Gastrocnemius medialis (tissue), 4 donors: ENCODE measurements at regions of chr16 and their contacts with region 1.

Region 1: DNA sequence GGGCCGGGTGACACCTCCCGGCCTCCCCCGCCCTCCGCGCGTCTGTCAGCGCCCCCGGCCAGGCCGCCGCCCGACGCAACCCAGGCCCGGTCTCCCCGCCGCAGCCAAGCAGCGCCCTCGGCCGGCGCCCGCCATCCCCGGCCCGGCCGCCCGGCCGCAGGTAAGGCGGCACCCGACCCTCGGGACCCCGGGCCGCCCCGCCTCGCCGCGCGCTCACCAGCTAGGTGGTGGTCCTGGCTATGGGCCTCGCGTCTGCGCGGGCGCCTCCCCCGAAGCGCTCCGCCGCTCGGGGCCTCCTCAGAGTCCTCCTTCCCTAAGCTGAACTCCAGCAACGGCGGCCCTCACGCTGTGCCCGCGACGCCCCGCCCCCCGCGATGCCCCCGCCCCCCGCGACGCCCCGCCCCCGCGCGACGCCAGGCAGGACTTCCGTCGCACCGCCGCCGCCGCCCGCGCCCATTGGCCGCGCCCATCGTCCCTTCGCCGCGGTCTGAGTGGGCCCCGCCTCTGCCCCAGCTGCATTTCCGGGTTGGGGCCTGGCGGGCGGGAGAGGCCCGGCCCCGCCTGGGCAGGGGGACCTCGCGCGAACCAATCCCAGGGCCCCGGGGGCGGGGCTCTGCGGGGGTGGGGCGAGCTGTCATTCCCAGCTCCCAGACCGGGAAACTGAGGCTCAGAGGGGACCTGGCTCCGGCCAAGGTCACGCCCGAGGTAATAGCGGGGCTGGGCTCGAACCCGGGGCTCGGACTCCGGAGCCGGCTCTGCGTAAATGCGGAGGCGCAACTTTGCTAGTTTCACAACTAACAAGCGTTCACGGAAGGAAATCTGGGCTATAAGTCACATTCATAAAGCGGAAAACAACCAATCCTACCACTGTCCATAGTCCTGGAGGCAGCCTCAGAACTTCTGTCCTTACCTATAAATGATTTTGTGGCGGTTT is 9.0 kb upstream of the KCTD5 start:
- DNase-seq: peak; percentile 91 to 96
- ATAC-seq: peak; percentile 70 to 84
- H3K4me3 ChIP-seq: peak overlapping the region; percentile 58 to 89 (median 72)
- H3K27ac ChIP-seq: peak overlapping the region; percentile 79 to 86 (median 82)
- H3K4me1 ChIP-seq: peaks cover 26 to 32% of the 10 kb centered on the region in 2 donors
- H3K27me3 ChIP-seq: no peaks in the 10 kb centered on the region
- CTCF ChIP-seq: no peak
- POLR2A ChIP-seq: peak; percentile 67 to 69

Region 2: GRCh38 chr16:2155091-2156021 is 518.0 kb before region 1 on chr16 and contains the start of gene TRAF7:
- in situ Hi-C with region 1: no loop called
- intact Hi-C with region 1: loop called (anchors 5 kb)
- DNase-seq: peak; percentile 99 to 100
- ATAC-seq: peak; percentile 95 to 98
- H3K4me3 ChIP-seq: peak within 1 kb of the TSS; percentile 71 to 89 (median 82)
- H3K27ac ChIP-seq: peak within 1 kb of the TSS; percentile 84 to 90 (median 86)
- H3K4me1 ChIP-seq: peaks cover 53 to 66% of the 10 kb centered on the region in 2 donors
- H3K27me3 ChIP-seq: no peaks in the 10 kb centered on the region
- CTCF ChIP-seq: peak in 1 of 5 experiments; percentile 3
- POLR2A ChIP-seq: peak; percentile 99
- total RNA-seq, gene TRAF7: 39.5 to 71.4 (median 55.9) TPM

Region 3: DNA sequence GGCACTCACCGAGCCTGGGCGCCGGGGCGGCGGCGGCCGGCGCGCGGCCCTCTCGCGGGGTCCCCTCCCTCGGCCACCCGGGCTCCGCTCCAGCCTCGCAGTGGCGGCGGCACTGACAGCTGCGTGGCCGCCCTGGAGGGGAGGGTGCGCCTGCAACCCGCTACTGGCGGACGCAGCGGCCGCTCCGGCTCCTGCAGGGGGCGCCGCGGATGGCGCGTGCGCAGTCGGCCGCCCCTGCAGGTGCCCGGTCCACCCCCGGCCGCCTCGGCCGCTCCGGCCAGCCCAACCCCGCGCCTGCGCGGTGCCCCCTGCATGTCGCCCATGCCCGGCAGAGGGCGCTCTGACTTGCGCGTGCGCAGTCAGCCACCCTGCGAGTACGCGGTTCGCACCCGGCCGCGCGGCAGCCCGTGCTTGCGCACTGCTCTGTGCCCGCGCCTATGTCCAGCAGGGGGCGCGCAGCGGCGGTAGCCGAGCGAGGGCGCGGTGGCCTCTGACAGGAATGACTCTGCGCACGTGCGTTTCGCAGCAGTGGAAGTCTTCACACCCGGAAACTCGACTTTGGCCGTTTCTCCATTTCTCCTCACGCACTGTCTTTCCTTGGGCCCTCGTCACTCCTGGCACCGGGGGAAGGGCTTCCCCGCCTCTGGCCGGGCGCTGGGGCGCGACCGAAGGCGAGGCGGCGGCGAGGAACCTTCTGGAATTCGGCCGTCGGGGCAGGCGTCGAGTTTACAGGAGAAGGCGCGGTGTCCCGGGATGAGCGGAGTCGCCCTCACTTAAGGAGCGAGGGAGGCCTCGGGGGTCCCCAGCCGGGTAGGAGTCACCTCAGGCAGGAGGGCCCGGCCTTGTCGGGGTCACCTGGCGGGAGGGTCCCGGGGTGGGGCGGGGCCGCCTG is 332.5 kb before region 1 on chr16 and contains the start of gene ABCA3:
- in situ Hi-C with region 1: no loop called
- intact Hi-C with region 1: no loop called
- DNase-seq: peak; percentile 74 to 87
- ATAC-seq: peak; percentile 84 to 89
- H3K4me3 ChIP-seq: peak within 1 kb of the TSS; percentile 65 to 98 (median 82)
- H3K27ac ChIP-seq: peak within 1 kb of the TSS; percentile 30 to 54 (median 36)
- H3K4me1 ChIP-seq: peaks cover 9 to 20% of the 10 kb centered on the region in 2 donors
- H3K27me3 ChIP-seq: no peaks in the 10 kb centered on the region
- CTCF ChIP-seq: peak; percentile 96 to 100 (median 100)
- POLR2A ChIP-seq: peak; percentile 40 to 70
- total RNA-seq, gene ABCA3: 2.7 to 15.0 (median 10.9) TPM

Region 4: DNA sequence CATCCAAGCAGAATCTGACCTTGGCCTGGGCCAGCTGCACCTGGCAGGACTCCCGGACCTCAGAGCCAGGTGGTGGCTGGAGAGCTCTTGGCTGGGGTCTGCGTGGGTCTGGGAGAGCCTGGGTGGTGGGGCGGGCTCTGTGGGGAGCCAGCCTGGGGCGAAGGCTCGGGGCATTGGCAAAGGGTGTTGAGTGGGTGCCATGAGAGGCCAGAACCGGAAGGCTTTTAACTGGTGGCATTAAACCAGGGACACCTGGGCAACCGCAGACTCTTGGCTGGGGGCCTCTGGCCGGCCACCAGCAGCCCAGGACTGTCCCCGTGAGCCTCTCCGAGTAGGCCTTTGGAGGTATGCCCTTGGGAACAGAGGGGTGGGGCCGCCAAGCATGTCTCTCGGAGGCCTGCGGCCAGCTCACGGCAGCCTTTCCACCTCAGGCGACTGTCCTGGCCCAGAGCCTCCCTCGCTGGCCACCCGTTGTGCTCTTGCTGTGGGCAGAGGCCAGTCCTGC is 30.0 kb after region 1 on chr16:
- in situ Hi-C with region 1: no loop called
- intact Hi-C with region 1: loop called (anchors 1 kb)
- DNase-seq: peak; percentile 90 to 97
- ATAC-seq: peak; percentile 90 to 92
- H3K4me3 ChIP-seq: no peak overlapping the region
- H3K27ac ChIP-seq: peak overlapping the region; percentile 65 to 86 (median 78)
- H3K4me1 ChIP-seq: peaks cover 29% of the 10 kb centered on the region in 2 donors
- H3K27me3 ChIP-seq: no peaks in the 10 kb centered on the region
- CTCF ChIP-seq: no peak
- POLR2A ChIP-seq: no peak

Region 5: GRCh38 chr16:2867987-2868789 is 194.9 kb after region 1 on chr16:
- in situ Hi-C with region 1: no loop called
- intact Hi-C with region 1: loop called (anchors 10 kb)
- DNase-seq: peak; percentile 71 to 91
- ATAC-seq: peak; percentile 94
- H3K4me3 ChIP-seq: peak overlapping the region; percentile 71 to 79 (median 77)
- H3K27ac ChIP-seq: peak overlapping the region; percentile 87 to 93 (median 88)
- H3K4me1 ChIP-seq: peaks cover 8 to 10% of the 10 kb centered on the region in 2 donors
- H3K27me3 ChIP-seq: no peaks in the 10 kb centered on the region
- CTCF ChIP-seq: peak; percentile 95 to 98 (median 98)
- POLR2A ChIP-seq: peak; percentile 30 to 65